ENCODE measurements at regions of chr7 and their contacts with region 1.

Region 1: GRCh38 chr7:132239422-132239994 is 336.8 kb downstream of the PLXNA4 start:
- DNase-seq: no peak
- ATAC-seq: no peak
- H3K4me3 ChIP-seq: no peak overlapping the region
- H3K27ac ChIP-seq: no peak overlapping the region
- H3K4me1 ChIP-seq: peaks cover 0 to 3% (median 0%) of the 10 kb centered on the region in 12 donors
- H3K27me3 ChIP-seq: no peaks in the 10 kb centered on the region
- CTCF ChIP-seq: no peak
- POLR2A ChIP-seq: no peak

Region 2: GRCh38 chr7:131890176-131890575 is 349.3 kb before region 1 on chr7:
- intact Hi-C with region 1: no loop called
- DNase-seq: no peak
- ATAC-seq: no peak
- H3K4me3 ChIP-seq: no peak overlapping the region
- H3K27ac ChIP-seq: no peak overlapping the region
- H3K4me1 ChIP-seq: peaks cover 0 to 8% (median 0%) of the 10 kb centered on the region in 12 donors
- H3K27me3 ChIP-seq: no peaks in the 10 kb centered on the region
- CTCF ChIP-seq: no peak
- POLR2A ChIP-seq: no peak

Region 3: DNA sequence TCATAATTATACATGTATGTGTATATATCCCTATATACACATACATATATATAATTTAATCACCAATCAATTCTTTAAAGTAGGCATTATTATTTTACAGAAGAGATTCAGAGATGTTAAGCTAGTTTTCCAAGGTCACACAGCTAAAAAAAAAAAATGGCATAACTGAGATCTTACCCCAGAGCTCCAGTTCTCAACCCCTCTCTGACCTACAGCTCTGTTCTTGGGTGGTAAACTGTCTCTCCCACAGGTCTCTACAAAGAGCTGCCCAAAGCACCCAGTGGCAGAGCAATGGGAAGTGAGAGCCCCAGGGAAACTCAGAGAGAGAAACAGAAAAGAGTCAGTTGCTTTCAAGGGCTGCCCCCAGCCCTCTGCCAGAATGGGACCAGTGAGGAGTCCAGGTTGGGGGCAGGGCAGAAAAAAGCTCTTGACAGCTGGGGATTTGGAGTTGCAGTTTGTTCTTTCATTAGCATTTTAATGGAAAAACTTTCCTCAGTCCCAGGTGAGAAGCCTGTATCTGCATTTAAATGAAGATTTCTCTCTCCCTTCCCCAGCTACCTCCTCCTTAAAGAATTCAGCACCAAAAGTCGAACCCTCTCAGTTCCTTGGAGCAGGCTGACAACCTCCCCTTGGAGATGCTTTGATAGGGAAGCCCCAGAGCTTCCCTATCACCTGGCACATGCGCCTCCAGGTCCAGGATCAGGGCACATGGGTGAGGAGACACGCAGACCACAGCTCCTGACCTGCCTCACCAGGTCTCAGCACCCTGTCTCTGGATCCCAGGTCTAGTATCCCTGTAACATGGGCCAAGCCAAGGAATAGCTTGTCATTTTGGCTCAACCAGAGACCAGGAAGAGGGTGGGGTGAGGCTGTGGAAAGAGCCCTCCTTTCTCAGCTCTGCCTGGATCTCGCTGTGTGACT is 51.4 kb before region 1 on chr7:
- intact Hi-C with region 1: loop called in 1 of 10 experiments (anchors 5 kb)
- DNase-seq: no peak
- ATAC-seq: no peak
- H3K4me3 ChIP-seq: no peak overlapping the region
- H3K27ac ChIP-seq: no peak overlapping the region
- H3K4me1 ChIP-seq: peaks cover 0 to 3% (median 0%) of the 10 kb centered on the region in 12 donors
- H3K27me3 ChIP-seq: no peaks in the 10 kb centered on the region
- CTCF ChIP-seq: no peak
- POLR2A ChIP-seq: no peak

Region 4: GRCh38 chr7:132206594-132206993 is 32.9 kb before region 1 on chr7:
- intact Hi-C with region 1: no loop called
- DNase-seq: peak in 3 of 5 donors; percentile 35 to 39 (median 39)
- ATAC-seq: peak; percentile 29 to 69 (median 43)
- H3K4me3 ChIP-seq: no peak overlapping the region
- H3K27ac ChIP-seq: peak overlapping the region in 11 of 12 donors; percentile 17 to 92 (median 76)
- H3K4me1 ChIP-seq: peaks cover 0 to 25% (median 8%) of the 10 kb centered on the region in 12 donors
- H3K27me3 ChIP-seq: no peaks in the 10 kb centered on the region
- CTCF ChIP-seq: no peak
- POLR2A ChIP-seq: no peak

Region 5: GRCh38 chr7:132919771-132920170 is 680.3 kb after region 1 on chr7:
- intact Hi-C with region 1: no loop called
- DNase-seq: no peak
- ATAC-seq: no peak
- H3K4me3 ChIP-seq: no peak overlapping the region
- H3K27ac ChIP-seq: no peak overlapping the region
- H3K4me1 ChIP-seq: no peaks in the 10 kb centered on the region
- H3K27me3 ChIP-seq: no peaks in the 10 kb centered on the region
- CTCF ChIP-seq: no peak
- POLR2A ChIP-seq: no peak

Measured in heart left ventricle (tissue), 16 donors.